ENCODE measurements at regions of chr5 and their contacts with region 1.

Region 1: DNA sequence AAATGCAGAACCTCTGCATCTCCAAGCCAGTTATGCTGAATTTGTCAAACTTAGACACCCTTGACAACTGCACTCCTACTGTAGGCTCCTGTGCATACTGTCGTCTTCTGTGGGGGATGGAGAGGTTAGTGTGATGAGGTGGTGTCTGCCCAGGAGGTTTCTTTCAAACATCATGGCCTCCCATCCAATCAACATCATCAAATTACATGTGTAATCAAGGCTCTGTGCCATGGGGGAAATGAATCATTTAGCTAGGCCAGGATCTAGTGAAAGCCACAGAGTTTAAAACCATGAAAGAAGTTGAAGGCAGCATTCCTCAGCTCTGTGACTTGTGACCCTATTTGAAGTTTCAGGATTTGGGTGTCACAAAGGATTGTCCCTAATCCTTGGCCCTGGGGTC is 240.6 kb downstream of the MARCHF11 start:
- DNase-seq: no peak
- H3K4me3 ChIP-seq: no peak overlapping the region
- H3K4me3 Mint-ChIP-seq: no peak overlapping the region
- H3K27ac Mint-ChIP-seq: no peak overlapping the region
- H3K4me1 ChIP-seq: no peaks in the 10 kb centered on the region
- H3K4me1 Mint-ChIP-seq: no peaks in the 10 kb centered on the region
- H3K27me3 ChIP-seq: no peaks in the 10 kb centered on the region
- H3K27me3 Mint-ChIP-seq: no peaks in the 10 kb centered on the region
- CTCF ChIP-seq: no peak

Region 2: DNA sequence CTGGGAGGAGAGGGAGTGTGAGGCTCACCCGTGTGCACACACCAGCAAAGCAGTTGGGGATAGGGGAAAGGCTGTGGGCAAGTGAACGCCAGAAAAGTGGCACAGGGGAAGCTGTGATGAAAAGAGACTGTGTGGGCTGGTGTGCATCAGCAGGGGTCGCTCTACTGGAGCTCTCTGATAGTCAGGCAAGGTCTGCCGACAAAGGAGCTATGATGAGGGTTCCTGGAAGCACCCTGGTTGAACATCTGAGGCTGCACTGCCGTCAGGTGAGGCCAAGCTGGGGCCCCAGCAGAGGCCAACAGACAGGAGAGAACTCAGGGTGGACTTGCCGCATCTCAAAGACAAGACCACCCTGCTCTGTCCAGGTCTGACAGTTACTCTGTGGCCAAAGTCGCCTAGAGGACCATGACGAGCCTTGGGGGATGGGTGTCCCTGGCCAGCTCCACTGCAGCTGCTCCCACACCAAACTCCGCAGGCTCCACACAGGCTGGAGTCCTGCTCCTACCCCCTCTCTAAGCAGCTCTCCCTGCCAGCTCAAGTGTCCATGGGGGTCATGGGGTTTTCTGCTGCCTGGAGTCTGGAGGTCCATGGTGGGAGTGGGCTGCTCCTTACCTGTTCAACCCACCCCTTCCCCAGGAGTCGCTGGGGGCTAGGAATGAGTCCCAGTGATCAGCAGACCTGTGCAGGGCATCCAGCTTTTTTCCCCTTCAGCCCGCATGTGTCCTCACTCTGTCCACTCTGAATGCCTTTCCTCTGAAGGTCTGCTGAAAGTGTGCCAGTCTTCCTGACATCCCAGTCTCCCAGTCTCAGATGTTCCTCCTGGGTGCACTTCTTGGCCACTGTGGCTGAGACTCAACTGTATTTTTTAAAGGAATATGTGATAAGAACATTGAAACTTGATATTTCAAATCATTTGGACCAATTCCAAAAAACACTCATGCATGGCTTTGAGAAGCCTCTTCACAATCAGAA is 806.2 kb before region 1 on chr5:
- CTCF ChIA-PET with region 1: no interaction called
- POLR2A ChIA-PET with region 1: no interaction called
- intact Hi-C with region 1: no loop called
- DNase-seq: no peak
- H3K4me3 ChIP-seq: no peak overlapping the region
- H3K4me3 Mint-ChIP-seq: no peak overlapping the region
- H3K27ac Mint-ChIP-seq: no peak overlapping the region
- H3K4me1 ChIP-seq: no peaks in the 10 kb centered on the region
- H3K4me1 Mint-ChIP-seq: no peaks in the 10 kb centered on the region
- H3K27me3 ChIP-seq: no peaks in the 10 kb centered on the region; the same call in 1 of the 2 replicates
- H3K27me3 Mint-ChIP-seq: peaks cover 17% of the 10 kb centered on the region
- CTCF ChIP-seq: no peak

Region 3: DNA sequence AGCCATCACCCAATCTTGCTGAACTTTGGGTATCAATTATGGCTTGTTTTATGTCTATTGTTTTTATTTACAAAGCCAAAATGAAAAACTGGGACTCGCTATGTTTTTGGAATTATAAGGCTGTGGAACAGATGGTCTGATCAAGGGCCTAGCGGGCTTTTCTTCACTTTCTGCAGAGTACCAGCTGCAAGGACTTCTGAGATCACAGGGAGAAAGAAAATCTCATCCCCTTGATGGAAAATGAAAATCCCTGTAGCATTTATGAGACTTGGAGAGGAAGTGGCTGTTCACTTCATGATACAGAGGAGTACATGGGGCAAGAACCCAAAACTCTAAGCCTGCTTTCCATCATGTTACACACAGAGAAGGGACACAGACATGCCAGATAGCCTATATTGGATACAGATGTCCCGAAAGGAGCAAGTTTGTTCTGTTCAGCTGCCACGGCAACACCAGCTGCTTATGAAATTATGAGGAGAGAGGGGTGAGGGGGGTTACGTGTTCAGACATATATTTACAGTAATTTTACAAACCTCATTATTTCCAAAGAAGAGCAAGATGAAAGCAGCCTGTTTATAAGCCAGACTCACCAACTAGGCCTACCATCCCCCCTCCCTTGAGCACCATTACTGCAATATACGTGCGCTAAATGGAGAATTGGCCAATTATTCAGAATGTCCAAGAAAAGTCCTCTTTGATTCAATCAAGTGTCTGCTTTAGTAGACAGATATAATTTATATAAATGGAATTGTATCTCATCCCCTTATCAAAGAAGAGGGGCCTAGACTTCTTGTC is 20.6 kb after region 1 on chr5:
- CTCF ChIA-PET with region 1: no interaction called
- POLR2A ChIA-PET with region 1: no interaction called
- intact Hi-C with region 1: loop called (anchors 1 kb)
- DNase-seq: no peak
- H3K4me3 ChIP-seq: no peak overlapping the region
- H3K4me3 Mint-ChIP-seq: no peak overlapping the region
- H3K27ac Mint-ChIP-seq: no peak overlapping the region
- H3K4me1 ChIP-seq: no peaks in the 10 kb centered on the region
- H3K4me1 Mint-ChIP-seq: no peaks in the 10 kb centered on the region
- H3K27me3 ChIP-seq: no peaks in the 10 kb centered on the region
- H3K27me3 Mint-ChIP-seq: no peaks in the 10 kb centered on the region
- CTCF ChIP-seq: no peak

Region 4: GRCh38 chr5:16568875-16569580 is 630.1 kb after region 1 on chr5:
- CTCF ChIA-PET with region 1: no interaction called
- POLR2A ChIA-PET with region 1: no interaction called
- intact Hi-C with region 1: no loop called
- DNase-seq: no peak
- H3K4me3 ChIP-seq: no peak overlapping the region
- H3K4me3 Mint-ChIP-seq: no peak overlapping the region
- H3K27ac Mint-ChIP-seq: no peak overlapping the region
- H3K4me1 ChIP-seq: peaks cover 3% of the 10 kb centered on the region
- H3K4me1 Mint-ChIP-seq: peaks cover 12% of the 10 kb centered on the region
- H3K27me3 ChIP-seq: no peaks in the 10 kb centered on the region
- H3K27me3 Mint-ChIP-seq: no peaks in the 10 kb centered on the region
- CTCF ChIP-seq: no peak

Measured in Caco-2 (cell line).